Endothelial cell of umbilical vein (primary cell): ENCODE measurements at regions of chr2 and their contacts with region 1.

Region 1: DNA sequence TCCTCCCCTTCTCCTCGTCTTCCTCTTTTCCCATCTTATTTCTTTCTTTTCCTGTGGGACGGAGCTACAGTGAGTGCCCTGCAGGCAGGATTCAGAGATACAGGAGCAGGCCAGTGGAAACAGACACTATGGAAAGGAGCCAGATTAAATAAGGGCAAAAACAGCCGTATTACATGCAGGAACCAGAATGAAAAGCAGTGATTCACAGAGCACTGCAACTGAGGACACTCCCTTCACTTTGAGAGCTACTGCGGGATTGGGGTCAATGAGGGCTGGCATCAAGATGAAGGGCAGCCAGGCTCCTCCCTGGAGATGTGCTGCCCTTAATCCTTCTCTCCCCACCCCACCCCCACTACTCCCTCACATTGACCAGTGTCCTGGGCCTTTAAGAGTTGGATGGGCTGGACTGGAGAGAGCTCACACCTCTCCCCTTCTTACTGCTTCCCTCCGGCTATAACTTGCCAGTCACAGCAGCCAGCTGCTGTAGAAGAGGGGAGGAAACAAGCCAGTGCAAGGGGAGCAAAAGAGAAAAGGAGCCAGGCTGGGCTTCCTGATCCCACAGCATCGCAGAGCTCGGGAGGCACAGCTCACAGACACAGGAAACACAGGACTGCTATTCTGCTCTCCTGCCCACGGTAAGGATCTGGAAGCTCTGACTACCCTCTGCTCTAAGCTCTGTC is at the start of gene PLCD4:
- DNase-seq: peak; percentile 79
- H3K4me3 ChIP-seq: no peak within 1 kb of the TSS
- H3K27ac ChIP-seq: no peak within 1 kb of the TSS
- H3K4me1 ChIP-seq: peaks cover 10% of the 10 kb centered on the region
- H3K27me3 ChIP-seq: peaks cover 0 to 2% of the 10 kb centered on the region in 2 experiments
- CTCF ChIP-seq: no peak
- POLR2A ChIP-seq: peak; percentile 41
- total RNA-seq, gene PLCD4: 1.4 and 3.1 TPM in 2 replicates

Region 2: DNA sequence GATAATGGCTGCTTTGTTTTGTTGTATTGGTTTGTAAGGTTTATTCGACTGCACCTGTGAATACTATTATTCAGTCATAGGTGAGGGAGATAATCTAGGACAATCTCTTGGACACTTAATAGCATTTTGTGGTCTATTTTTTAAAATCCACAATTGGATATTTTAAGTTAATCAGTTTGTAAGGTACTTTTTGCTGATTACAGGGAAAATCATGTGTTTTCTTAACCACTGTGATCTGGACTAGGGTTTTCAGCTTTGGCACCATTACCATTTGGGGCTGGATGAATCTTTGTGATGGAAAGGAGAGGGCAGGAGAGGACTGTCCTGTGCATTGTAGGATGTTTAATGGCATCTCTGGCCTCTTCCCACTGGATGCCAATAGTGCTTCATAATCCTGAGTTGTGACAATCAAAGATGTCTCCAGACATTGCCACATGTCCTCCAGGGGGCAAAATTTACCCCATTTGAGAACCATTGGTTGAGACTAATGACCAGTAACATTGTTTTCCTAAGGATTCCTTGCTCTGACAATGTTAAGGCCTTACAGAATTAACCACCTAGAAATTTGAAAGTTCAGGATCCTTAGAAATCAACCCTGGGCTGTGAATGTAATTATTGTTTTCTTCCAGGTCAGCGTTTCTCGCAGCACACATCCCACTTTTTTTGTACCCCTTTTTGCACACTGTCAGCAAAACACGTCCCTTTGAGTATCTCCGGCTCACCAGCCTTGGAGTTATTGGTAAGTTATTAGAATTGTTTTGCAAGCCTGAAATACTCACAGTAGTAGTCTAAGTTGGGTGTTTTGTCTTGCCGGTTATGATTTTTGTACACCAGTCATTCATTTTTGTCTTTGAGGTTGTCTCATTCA is 23.4 kb before region 1 on chr2:
- CTCF ChIA-PET with region 1: interaction called, 14 read pairs
- POLR2A ChIA-PET with region 1: no interaction called
- dilution Hi-C with region 1: no loop called
- intact Hi-C with region 1: no loop called
- DNase-seq: peak; percentile 21
- H3K4me3 ChIP-seq: no peak overlapping the region
- H3K27ac ChIP-seq: no peak overlapping the region
- H3K4me1 ChIP-seq: peaks cover 5% of the 10 kb centered on the region
- H3K27me3 ChIP-seq: no peaks in the 10 kb centered on the region
- CTCF ChIP-seq: peak; percentile 8 to 16
- POLR2A ChIP-seq: no peak

Region 3: GRCh38 chr2:218618102-218618860 is 10.7 kb after region 1 on chr2:
- CTCF ChIA-PET with region 1: interaction called, 15 read pairs
- POLR2A ChIA-PET with region 1: no interaction called
- dilution Hi-C with region 1: no loop called
- intact Hi-C with region 1: no loop called
- DNase-seq: no peak
- H3K4me3 ChIP-seq: no peak overlapping the region
- H3K27ac ChIP-seq: no peak overlapping the region
- H3K4me1 ChIP-seq: peaks cover 9% of the 10 kb centered on the region
- H3K27me3 ChIP-seq: no peaks in the 10 kb centered on the region
- CTCF ChIP-seq: no peak
- POLR2A ChIP-seq: no peak